ENCODE measurements at regions of chr20 and their contacts with region 1.

Region 1: GRCh38 chr20:47281376-47281775 is 75.1 kb downstream of the ZMYND8 start:
- DNase-seq: no peak
- H3K4me3 ChIP-seq: no peak overlapping the region
- H3K27ac ChIP-seq: no peak overlapping the region
- H3K4me1 ChIP-seq: peaks cover 2% of the 10 kb centered on the region
- H3K27me3 ChIP-seq: no peaks in the 10 kb centered on the region
- CTCF ChIP-seq: no peak

Region 2: GRCh38 chr20:47326658-47327268 is 45.4 kb after region 1 on chr20:
- CTCF ChIA-PET with region 1: no interaction called
- dilution Hi-C with region 1: loop called (anchors 5 kb)
- in situ Hi-C with region 1: no loop called
- intact Hi-C with region 1: no loop called
- DNase-seq: no peak
- H3K4me3 ChIP-seq: no peak overlapping the region
- H3K27ac ChIP-seq: no peak overlapping the region
- H3K4me1 ChIP-seq: peaks cover 25% of the 10 kb centered on the region
- H3K27me3 ChIP-seq: no peaks in the 10 kb centered on the region
- CTCF ChIP-seq: no peak

Measured in mammary epithelial cell (primary cell).